Activated T-helper 1 cell treated with anti-CD3 and anti-CD28 coated beads, Interleukin-12 subunit alpha, Interleukin-12 subunit beta, Interleukin-2, Interleukin-4 antibody, amounts not matched to agents 30 ng/mL and 10 ng/mL and 1 ng/mL, durations not matched to agents 14 hours and 24 hours and 36 hours (primary cell): ENCODE measurements at regions of chr17 and their contacts with region 1.

Region 1: GRCh38 chr17:39980351-39981206 is at the start of gene PSMD3:
- DNase-seq: peak; percentile 97
- H3K4me3 Mint-ChIP-seq: peak within 1 kb of the TSS; percentile 96
- H3K27ac Mint-ChIP-seq: peak within 1 kb of the TSS; percentile 92
- H3K4me1 Mint-ChIP-seq: peaks cover 32% of the 10 kb centered on the region
- H3K27me3 Mint-ChIP-seq: peaks cover 6% of the 10 kb centered on the region
- total RNA-seq, gene PSMD3: 191 and 201 TPM in 2 replicates

Region 2: GRCh38 chr17:39636927-39637736 is 343.4 kb before region 1 on chr17 and contains the start of gene STARD3:
- intact Hi-C with region 1: loop called (anchors 5 kb)
- DNase-seq: peak; percentile 88
- H3K4me3 Mint-ChIP-seq: peak within 1 kb of the TSS; percentile 94
- H3K27ac Mint-ChIP-seq: peak within 1 kb of the TSS; percentile 85
- H3K4me1 Mint-ChIP-seq: peaks cover 34% of the 10 kb centered on the region
- H3K27me3 Mint-ChIP-seq: peaks cover 2% of the 10 kb centered on the region
- total RNA-seq, gene STARD3: 54.7 and 65.3 TPM in 2 replicates

Region 3: DNA sequence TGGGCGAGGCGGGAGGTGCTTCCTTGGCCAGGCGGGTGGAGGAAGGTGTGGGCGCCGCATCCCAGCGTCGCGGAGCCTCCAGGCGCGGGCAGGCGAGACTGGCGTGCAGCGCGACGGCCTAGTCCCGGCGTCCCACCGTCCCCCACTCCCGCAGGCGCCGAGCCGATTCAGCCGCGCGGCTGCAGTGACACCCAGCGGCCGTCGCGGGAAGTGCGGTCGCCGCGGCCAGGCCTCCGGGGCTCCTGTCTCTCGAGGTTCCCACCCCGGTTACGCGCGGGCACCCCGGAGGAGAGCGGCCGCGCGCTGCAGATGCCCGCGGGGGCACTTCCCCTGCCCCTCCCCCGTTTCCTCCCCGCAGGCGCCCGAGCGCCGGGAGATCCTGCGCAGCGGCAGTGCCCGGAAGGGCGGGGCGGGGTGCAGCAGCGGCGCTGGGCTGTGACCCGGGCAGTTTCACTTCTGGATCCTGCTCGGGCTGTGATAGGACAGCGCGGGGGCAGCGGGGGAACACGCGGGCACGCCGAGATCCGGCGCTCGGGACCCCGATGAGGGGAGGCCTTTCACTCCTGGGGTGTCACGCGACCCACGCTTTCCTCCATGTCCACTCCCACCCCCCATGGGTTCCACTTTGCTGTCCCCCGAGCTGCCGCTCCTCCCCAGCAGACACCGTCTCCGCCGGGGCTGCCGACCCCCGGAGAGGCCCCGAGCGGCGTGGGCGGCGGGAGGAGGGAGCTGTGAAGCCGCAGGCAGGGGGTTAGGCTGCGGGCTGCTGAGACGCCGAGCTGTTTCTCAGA is 226.2 kb before region 1 on chr17:
- intact Hi-C with region 1: loop called (anchors 1 kb)
- DNase-seq: peak; percentile 97
- H3K4me3 Mint-ChIP-seq: peak overlapping the region; percentile 81
- H3K27ac Mint-ChIP-seq: peak overlapping the region; percentile 53
- H3K4me1 Mint-ChIP-seq: peaks cover 60% of the 10 kb centered on the region
- H3K27me3 Mint-ChIP-seq: no peaks in the 10 kb centered on the region

Region 4: GRCh38 chr17:39863918-39864746 is 116.4 kb before region 1 on chr17 and contains the start of gene IKZF3:
- intact Hi-C with region 1: loop called (anchors 1 kb)
- DNase-seq: peak; percentile 79
- H3K4me3 Mint-ChIP-seq: peak within 1 kb of the TSS; percentile 91
- H3K27ac Mint-ChIP-seq: peak within 1 kb of the TSS; percentile 73
- H3K4me1 Mint-ChIP-seq: peaks cover 63% of the 10 kb centered on the region
- H3K27me3 Mint-ChIP-seq: peaks cover 5% of the 10 kb centered on the region
- total RNA-seq, gene IKZF3: 22.8 and 25.1 TPM in 2 replicates

Region 5: DNA sequence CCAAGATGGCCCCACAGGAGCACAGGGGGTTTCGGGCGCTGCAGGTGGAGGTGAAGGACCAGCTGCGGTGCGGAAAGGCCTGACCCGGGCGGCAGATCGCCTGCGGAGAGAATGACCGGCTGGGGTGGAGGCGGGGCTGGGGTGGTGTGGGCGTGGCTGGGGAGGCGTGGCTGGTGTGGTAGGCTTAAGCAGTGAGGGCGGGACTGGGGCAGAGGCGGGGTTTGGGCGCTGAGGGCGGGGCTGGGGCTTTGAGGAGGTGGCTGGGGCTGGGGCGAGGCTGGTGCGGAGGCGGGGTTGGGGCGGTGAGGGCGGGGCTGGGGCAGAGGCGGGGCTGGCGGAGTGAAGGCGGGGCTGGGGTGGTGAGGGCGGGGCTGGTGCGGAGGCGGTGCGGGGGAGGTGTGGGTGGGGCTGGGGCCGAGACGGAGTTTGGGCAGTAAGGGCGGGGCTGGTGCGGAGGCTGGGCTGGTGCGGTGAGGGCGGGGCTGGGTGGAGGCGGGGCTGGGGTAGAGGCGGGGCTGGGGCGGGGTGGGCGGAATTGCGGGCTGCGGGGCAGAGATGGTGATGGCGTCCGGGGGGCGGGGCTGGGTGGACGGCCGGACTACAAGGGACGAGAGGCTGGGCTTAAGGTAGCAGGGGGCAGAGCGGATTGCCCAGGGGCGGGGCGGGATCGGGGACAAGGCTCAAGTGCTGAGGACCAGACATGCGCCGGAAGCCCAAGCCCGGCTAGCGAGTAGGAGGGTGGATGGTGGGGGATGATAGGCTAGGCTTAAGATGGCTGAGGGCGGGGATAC is 27.7 kb before region 1 on chr17:
- intact Hi-C with region 1: loop called (anchors 1 kb)
- DNase-seq: peak; percentile 79
- H3K4me3 Mint-ChIP-seq: peak overlapping the region; percentile 79
- H3K27ac Mint-ChIP-seq: peak overlapping the region; percentile 77
- H3K4me1 Mint-ChIP-seq: peaks cover 38% of the 10 kb centered on the region
- H3K27me3 Mint-ChIP-seq: peaks cover 3% of the 10 kb centered on the region

Region 6: DNA sequence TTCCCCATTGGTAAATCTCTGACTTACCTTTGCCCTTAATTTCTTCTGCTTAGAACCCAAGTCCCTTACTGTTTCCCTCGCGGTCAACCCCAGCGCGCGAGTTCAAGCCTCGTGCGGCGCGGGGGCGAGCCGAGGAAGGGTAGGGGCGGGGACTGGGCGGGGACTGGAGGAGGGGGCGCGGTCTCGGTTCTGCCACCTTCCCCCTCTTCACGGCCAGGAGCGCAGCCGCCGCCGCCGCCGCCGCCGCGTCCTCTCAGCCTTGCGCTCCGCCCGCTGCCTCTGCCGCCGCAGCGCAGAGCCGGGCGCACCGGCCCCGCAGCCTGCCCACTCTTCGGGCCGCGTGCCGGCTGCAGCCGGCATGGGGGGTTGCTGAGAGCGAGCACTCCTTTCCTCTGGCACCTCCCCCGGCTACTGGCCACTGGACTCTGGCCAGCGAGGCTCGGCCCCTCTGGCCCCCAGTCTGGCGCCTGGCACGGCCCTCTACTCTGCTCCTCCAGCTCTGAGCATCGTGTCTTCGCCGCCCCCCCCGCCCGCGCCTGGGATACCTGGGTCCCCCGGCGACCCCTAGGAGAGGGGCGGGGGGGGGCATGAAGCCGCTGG is 196.8 kb after region 1 on chr17 and contains the start of gene RAPGEFL1:
- intact Hi-C with region 1: no loop called
- DNase-seq: peak; percentile 69
- H3K4me3 Mint-ChIP-seq: peak within 1 kb of the TSS; percentile 51
- H3K27ac Mint-ChIP-seq: peak within 1 kb of the TSS; percentile 70
- H3K4me1 Mint-ChIP-seq: peaks cover 8% of the 10 kb centered on the region
- H3K27me3 Mint-ChIP-seq: no peaks in the 10 kb centered on the region
- total RNA-seq, gene RAPGEFL1: 11.8 and 13.0 TPM in 2 replicates